ENCODE measurements at regions of chr9 and their contacts with region 1.

Region 1: GRCh38 chr9:16191691-16192402 is 639.0 kb downstream of the CCDC171 start:
- DNase-seq: peak; percentile 58 to 66
- H3K4me3 ChIP-seq: no peak overlapping the region
- H3K27ac ChIP-seq: peak overlapping the region; percentile 41; the same call in 1 of the 2 replicates
- H3K4me1 ChIP-seq: peaks cover 11% of the 10 kb centered on the region; the same call in 1 of the 2 replicates
- H3K27me3 ChIP-seq: no peaks in the 10 kb centered on the region
- CTCF ChIP-seq: peak; percentile 64

Region 2: DNA sequence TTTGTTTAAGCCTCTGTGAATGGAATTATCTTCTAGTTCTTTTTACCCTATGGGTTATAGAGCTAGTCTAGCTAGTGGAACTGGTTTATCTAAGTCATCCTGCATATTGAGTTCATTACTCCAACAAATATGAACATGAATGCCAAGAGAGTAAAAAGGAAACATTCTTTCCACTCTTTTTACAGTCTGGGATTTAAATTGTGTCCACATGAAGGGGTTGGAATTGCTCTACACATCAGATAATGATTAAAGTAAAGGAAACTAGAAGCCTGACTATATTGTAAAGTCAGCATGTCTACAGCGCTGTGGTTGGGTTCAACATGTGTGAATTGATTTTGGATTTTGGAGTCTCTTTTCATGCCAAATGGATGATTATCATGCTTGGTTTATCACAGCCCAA is 465.9 kb before region 1 on chr9:
- CTCF ChIA-PET with region 1: no interaction called
- POLR2A ChIA-PET with region 1: no interaction called
- intact Hi-C with region 1: no loop called
- DNase-seq: no peak
- H3K4me3 ChIP-seq: no peak overlapping the region
- H3K27ac ChIP-seq: no peak overlapping the region
- H3K4me1 ChIP-seq: no peaks in the 10 kb centered on the region
- H3K27me3 ChIP-seq: no peaks in the 10 kb centered on the region
- CTCF ChIP-seq: no peak

Region 3: GRCh38 chr9:15873569-15874177 is 318.2 kb before region 1 on chr9:
- CTCF ChIA-PET with region 1: no interaction called
- POLR2A ChIA-PET with region 1: no interaction called
- intact Hi-C with region 1: loop called (anchors 5 kb)
- DNase-seq: no peak
- H3K4me3 ChIP-seq: no peak overlapping the region
- H3K27ac ChIP-seq: peak overlapping the region; percentile 59
- H3K4me1 ChIP-seq: peaks cover 9% of the 10 kb centered on the region; the same call in 1 of the 2 replicates
- H3K27me3 ChIP-seq: no peaks in the 10 kb centered on the region
- CTCF ChIP-seq: peak; percentile 75

Region 4: DNA sequence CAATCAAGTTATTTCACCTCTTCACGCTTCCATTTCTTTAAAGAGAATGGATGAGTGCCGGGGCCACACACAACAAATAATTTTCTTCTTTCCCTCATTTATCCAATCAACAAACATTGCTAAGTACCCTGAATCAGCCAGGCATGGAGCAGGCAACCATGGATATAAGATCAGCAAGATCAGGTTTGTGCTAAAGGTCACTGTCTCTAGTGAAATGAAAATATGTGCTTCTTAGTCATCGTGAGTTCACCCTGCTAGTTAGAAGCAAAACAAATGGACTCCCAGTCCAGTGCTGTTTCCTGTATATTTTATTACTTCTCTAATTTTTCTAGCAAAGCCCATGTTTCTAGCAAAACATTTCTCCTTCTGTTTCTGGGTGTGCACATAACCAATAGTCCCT is 49.4 kb after region 1 on chr9:
- CTCF ChIA-PET with region 1: no interaction called
- POLR2A ChIA-PET with region 1: interaction called, 3 read pairs
- intact Hi-C with region 1: loop called (anchors 5 kb)
- DNase-seq: no peak
- H3K4me3 ChIP-seq: no peak overlapping the region
- H3K27ac ChIP-seq: no peak overlapping the region; the same call in 1 of the 2 replicates
- H3K4me1 ChIP-seq: peaks cover 11% of the 10 kb centered on the region
- H3K27me3 ChIP-seq: no peaks in the 10 kb centered on the region
- CTCF ChIP-seq: no peak

Region 5: DNA sequence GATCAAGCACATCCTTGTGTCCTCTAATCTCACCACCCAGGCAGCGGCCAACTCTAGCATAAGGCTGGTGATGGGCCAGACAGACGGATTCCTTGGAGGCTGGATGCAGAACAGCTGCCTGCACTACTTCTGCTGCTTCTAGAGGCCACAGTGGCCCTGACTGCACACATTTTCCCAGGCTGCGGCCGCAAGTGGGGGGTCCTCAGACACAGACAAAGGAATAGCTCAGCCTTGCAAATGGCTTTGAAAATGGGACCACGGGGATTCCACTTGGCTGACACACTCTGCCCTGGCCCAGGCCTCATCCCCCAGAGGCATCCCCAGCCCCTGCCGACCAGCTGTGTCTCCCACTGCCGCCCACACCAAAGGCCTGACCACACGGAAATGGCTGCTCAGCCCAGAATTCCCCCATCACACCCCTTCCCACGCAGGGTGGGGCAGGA is 137.8 kb after region 1 on chr9:
- CTCF ChIA-PET with region 1: no interaction called
- POLR2A ChIA-PET with region 1: no interaction called
- intact Hi-C with region 1: no loop called
- DNase-seq: no peak
- H3K4me3 ChIP-seq: no peak overlapping the region
- H3K27ac ChIP-seq: no peak overlapping the region
- H3K4me1 ChIP-seq: no peaks in the 10 kb centered on the region
- H3K27me3 ChIP-seq: no peaks in the 10 kb centered on the region
- CTCF ChIP-seq: no peak

Region 6: DNA sequence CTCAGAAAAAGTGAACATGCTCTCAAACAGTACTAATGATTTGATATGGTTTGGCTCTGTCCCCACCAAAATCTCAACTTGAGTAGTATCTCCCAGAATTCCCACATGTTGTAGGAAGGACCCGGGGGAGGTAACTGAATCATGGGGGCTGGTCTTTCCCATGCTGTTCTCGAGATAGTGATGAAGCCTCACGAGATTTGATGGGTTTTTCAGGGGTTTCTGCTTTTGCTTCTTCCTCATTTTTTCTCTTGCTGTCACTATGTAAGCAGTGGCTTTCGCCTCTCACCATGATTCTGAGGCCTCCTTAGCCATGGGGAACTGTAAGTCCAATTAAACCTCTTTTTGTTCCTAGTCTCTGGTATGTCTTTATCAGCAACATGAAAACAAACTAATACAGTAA is 277.3 kb after region 1 on chr9:
- CTCF ChIA-PET with region 1: no interaction called
- POLR2A ChIA-PET with region 1: no interaction called
- intact Hi-C with region 1: loop called (anchors 5 kb)
- DNase-seq: no peak
- H3K4me3 ChIP-seq: no peak overlapping the region
- H3K27ac ChIP-seq: no peak overlapping the region
- H3K4me1 ChIP-seq: no peaks in the 10 kb centered on the region
- H3K27me3 ChIP-seq: no peaks in the 10 kb centered on the region
- CTCF ChIP-seq: no peak

Region 7: DNA sequence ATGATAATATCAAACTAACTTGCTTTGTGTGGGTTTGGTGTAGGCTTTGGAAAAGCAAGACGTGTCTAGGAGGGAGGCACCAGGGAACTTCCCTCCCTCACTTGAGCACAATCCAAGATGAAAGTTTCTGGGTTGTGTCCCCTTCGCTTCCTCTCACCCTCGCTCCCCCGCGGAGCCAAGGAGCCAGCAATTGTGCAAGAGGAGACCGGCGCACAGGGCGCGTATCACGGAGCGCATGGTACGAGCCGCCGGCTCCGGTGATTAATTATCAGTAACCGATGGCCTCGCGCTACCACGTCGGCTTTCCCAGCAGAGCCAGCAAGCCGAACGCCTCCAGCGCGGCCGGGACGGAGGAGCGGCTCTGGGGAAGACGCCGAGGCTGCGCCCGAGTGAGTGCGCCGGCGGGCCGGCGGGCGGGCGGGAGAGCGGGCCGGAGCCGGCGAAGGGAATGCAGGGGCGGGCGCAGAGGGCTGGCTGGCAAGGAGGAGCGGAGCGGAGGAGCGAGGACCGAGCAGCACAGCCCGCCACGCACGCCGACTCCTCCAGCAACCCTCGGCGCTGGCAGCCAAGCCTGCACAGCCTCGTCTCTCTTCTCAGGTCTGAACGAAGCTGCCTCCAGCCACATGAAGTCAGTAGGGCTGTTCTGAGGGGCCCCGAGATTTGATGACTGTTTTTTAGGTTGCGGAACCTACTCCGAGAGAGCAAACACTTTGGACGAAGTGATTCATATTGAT is 535.0 kb after region 1 on chr9:
- CTCF ChIA-PET with region 1: no interaction called
- POLR2A ChIA-PET with region 1: no interaction called
- intact Hi-C with region 1: loop called (anchors 1 kb)
- DNase-seq: peak; percentile 58 to 65
- H3K4me3 ChIP-seq: peak overlapping the region; percentile 77
- H3K27ac ChIP-seq: peak overlapping the region; percentile 92
- H3K4me1 ChIP-seq: peaks cover 27% of the 10 kb centered on the region
- H3K27me3 ChIP-seq: no peaks in the 10 kb centered on the region
- CTCF ChIP-seq: no peak

Measured in PC-9 (cell line).